Ovary (tissue), 10 donors: ENCODE measurements at regions of chr4 and their contacts with region 1.

Region 1: GRCh38 chr4:138090150-138090917 is 151.8 kb downstream of the SLC7A11 start:
- DNase-seq: peak in 4 of 5 donors; percentile 11 to 48 (median 36)
- H3K4me3 ChIP-seq: no peak overlapping the region
- H3K27ac ChIP-seq: no peak overlapping the region
- H3K4me1 ChIP-seq: no peaks in the 10 kb centered on the region
- H3K27me3 ChIP-seq: no peaks in the 10 kb centered on the region
- CTCF ChIP-seq: peak; percentile 28 to 67 (median 50)
- EP300 ChIP-seq: no peak
- POLR2A ChIP-seq: no peak

Region 2: DNA sequence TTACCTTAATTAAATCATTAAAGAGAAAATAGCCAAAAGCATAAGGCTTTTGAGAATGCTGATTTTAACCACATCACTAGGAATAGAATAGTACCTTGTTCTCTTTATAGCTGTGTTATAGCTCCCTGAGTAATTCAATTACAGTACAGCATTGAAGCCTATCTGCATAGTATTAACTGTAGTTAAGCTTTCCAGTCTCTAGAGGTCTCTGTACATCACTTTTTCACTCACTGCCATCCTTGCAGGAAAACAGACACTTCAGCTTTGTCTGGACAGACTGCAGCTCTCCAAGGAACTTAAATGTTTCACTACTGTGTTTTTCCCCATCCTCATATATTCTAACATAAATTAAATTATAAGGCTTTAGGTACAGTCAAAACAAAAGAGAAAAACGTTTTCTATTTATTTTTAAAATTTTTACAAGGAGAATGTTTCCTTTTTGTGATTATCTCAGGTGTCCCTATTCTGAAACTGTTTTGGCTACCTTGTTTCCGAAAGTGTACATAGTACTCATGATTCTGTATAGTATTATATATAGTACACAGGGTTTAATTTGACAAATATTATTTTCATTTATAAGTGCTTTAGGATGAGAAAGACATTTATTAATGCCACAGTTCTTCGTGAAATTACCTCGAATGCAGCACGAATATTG is 965.9 kb before region 1 on chr4:
- intact Hi-C with region 1: loop called in 1 of 4 experiments (anchors 5 kb)
- DNase-seq: no peak
- H3K4me3 ChIP-seq: peak overlapping the region; percentile 12
- H3K27ac ChIP-seq: no peak overlapping the region
- H3K4me1 ChIP-seq: no peaks in the 10 kb centered on the region
- H3K27me3 ChIP-seq: peaks cover 2% of the 10 kb centered on the region
- CTCF ChIP-seq: peak; percentile 42 to 53 (median 51)
- EP300 ChIP-seq: no peak
- POLR2A ChIP-seq: no peak

Region 3: GRCh38 chr4:138114434-138114833 is 24.1 kb after region 1 on chr4:
- intact Hi-C with region 1: no loop called
- DNase-seq: no peak
- H3K4me3 ChIP-seq: no peak overlapping the region
- H3K27ac ChIP-seq: no peak overlapping the region
- H3K4me1 ChIP-seq: no peaks in the 10 kb centered on the region
- H3K27me3 ChIP-seq: no peaks in the 10 kb centered on the region
- CTCF ChIP-seq: no peak
- EP300 ChIP-seq: no peak
- POLR2A ChIP-seq: no peak

Region 4: DNA sequence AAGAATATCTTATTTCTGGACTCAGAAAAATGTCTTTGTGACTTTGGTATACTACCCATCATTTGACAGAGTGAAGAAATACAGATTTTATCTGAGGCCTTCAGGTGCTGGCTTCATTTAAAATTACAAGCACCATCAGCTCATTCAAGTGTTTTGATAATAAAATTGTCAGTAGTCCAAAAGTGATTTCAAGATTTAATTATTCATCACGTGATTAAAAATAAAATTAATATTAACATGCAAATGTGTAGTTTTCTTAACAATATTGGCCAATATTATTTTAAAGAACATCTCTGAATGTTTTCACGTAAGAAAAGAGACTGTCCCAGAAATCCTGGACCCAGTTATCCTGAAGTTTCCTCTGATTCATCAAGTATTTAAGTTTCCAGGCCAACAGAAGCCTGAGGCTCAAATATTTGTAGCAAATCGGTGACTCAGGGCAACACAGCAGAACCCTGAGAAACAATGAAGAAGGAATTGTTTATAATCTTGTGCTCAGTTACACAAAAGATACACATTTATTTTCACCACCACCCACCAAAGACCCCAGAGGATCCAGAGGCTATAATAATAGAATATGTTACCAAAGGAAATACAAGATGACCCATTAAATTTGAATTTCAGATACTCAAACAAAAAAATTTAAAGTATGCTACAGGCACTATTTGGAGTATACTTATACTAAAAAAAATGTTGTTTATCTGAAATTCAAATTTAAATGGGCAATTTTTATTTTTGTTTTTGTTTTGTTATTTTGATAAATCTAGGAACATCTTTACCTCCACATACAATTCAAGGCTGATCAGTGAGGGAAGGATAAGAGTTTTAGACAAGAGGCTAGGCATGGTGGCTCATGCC is 185.7 kb after region 1 on chr4:
- intact Hi-C with region 1: no loop called
- DNase-seq: no peak
- H3K4me3 ChIP-seq: no peak overlapping the region
- H3K27ac ChIP-seq: no peak overlapping the region
- H3K4me1 ChIP-seq: no peaks in the 10 kb centered on the region
- H3K27me3 ChIP-seq: no peaks in the 10 kb centered on the region
- CTCF ChIP-seq: no peak
- EP300 ChIP-seq: no peak
- POLR2A ChIP-seq: no peak

Region 5: GRCh38 chr4:138669479-138670315 is 579.4 kb after region 1 on chr4:
- intact Hi-C with region 1: loop called in 1 of 4 experiments (anchors 10 kb)
- DNase-seq: no peak
- H3K4me3 ChIP-seq: no peak overlapping the region
- H3K27ac ChIP-seq: no peak overlapping the region
- H3K4me1 ChIP-seq: no peaks in the 10 kb centered on the region
- H3K27me3 ChIP-seq: no peaks in the 10 kb centered on the region
- CTCF ChIP-seq: no peak
- EP300 ChIP-seq: no peak
- POLR2A ChIP-seq: no peak

Region 6: DNA sequence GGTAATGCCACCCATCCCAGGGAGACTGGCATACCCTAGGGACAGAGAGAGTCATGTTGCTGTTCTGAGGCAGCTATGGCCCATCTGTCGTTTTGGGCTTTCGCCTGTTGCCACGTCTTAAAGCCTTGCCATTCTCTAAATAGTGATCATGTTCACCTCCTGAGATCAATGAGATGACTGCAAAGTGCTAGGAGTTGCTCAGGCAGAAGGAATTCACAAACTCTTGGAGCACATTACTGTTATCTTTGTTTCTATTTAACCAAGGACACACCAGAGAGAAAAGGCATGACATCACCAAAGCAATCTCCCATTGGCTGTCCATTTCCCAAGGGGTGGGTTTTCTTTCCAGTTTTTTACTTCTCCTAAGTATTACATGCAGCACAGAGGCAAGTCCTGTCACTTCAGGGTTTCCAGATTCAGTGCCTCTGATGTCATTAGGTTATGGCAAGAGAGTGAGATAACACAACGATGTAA is 1502.8 kb after region 1 on chr4:
- intact Hi-C with region 1: no loop called
- DNase-seq: peak in 3 of 5 donors; percentile 25 to 59 (median 28)
- H3K4me3 ChIP-seq: no peak overlapping the region
- H3K27ac ChIP-seq: no peak overlapping the region
- H3K4me1 ChIP-seq: peaks cover 6% of the 10 kb centered on the region
- H3K27me3 ChIP-seq: no peaks in the 10 kb centered on the region
- CTCF ChIP-seq: no peak
- EP300 ChIP-seq: no peak
- POLR2A ChIP-seq: no peak